ENCODE measurements at regions of chr20 and their contacts with region 1.

Region 1: GRCh38 chr20:37276494-37277252 is 12.8 kb upstream of the MANBAL start:
- DNase-seq: peak in 1 of 2 donors; percentile 88
- H3K4me3 ChIP-seq: no peak overlapping the region
- CTCF ChIP-seq: no peak
- POLR2A ChIP-seq: no peak

Region 2: DNA sequence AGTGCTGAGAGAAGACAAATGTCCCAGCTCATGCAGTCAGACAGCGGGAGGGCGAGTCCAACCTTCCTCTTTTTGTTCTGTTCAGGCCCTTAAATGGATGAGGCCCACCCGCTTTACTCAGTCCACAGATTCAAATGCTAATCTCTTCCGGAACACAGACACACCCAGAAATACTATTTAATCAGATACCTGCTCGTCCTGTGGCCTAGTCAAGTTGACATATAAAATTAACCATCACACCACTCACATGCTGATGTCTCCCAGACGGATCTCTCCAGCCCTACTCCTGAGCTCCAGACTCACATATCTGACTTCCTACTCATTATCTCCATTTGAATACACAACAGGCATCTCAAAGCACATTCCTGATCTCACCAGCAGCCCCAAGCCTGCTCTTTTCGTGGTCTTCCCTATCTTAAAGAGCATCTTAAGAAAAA is 42.6 kb after region 1 on chr20:
- intact Hi-C with region 1: no loop called
- DNase-seq: no peak
- H3K4me3 ChIP-seq: no peak overlapping the region
- CTCF ChIP-seq: no peak
- POLR2A ChIP-seq: no peak

Region 3: DNA sequence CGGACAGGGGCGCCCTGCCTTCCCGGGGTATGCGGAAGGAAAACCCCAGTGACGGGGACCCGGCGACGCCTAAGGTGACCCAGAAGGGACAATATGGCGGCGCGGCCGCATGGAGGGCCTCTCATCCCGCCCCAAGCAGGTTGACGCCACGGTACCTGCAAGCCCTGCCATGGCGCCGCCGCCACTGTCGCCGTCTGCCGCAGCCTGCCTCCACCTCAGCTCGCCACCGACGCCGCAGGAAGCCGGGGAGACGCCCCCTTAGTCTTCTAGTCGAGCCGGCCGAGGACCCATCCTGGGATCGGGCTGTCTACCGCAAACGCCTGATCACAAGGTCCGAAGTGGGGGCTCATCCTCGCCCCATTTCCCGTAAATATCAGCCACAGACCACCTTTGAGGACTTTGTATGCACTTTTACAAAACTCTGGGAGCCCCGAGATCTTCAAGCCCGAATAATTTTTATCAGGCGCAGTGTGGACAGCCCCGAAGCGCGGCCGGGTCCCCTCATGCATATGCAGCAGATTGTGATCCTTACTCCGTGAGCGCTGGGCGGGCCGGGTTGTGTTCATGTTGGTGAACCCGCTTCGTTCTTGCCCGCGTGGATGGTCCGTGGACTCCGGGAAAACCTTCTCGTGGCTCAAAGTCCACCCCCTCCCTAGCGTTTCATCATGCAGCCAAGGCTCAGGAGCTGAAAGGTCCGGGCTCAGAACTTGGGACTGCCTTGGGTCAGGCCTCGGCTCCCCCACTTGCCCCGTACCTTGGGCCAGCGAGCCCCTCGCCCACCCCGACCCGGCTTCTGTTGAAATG is 251.2 kb after region 1 on chr20 and contains the start of gene BLCAP:
- intact Hi-C with region 1: loop called (anchors 5 kb)
- DNase-seq: peak; percentile 86 to 98
- H3K4me3 ChIP-seq: peak within 1 kb of the TSS; percentile 97
- CTCF ChIP-seq: no peak
- POLR2A ChIP-seq: peak in 1 of 2 donors; percentile 18
- total RNA-seq, gene BLCAP: 91.3 to 136 (median 103) TPM